Mammary epithelial cell (primary cell): ENCODE measurements at regions of chr7 and their contacts with region 1.

Region 1: GRCh38 chr7:28389504-28390395 is 22.6 kb upstream of the CREB5 start:
- DNase-seq: peak; percentile 58
- H3K4me3 ChIP-seq: peak overlapping the region; percentile 26 to 58 (median 30)
- H3K27ac ChIP-seq: no peak overlapping the region
- H3K4me1 ChIP-seq: peaks cover 9% of the 10 kb centered on the region
- H3K27me3 ChIP-seq: no peaks in the 10 kb centered on the region
- CTCF ChIP-seq: peak; percentile 58 to 65

Region 2: DNA sequence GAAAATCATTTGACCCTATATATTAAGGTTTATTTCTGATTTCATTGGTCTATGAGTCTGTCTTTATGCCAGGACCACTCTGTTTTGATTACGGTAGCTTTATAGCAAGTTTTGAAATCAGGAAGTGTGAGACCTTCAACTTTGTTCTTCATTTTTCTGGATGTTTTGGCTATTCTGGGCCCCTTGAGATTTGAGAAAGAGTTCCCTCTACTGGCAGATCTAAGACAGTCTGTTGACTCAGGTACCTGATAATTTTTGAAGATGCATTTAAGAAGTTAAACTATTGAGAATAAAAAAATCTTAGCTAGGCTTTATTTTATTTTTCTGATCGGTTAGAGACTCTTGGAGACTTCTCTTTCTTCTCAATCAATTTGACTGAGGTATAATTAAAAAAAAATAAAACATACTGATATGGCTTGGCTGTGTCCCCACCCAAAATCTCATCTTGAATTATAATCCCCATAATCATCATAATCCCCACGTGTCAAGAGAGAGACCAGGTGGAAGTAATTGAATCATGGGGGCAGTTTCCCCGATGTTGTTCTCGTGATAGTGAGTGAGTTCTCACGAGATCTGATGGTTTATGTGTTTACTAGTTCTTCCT is 1888.9 kb before region 1 on chr7:
- CTCF ChIA-PET with region 1: no interaction called
- dilution Hi-C with region 1: no loop called
- in situ Hi-C with region 1: no loop called
- intact Hi-C with region 1: no loop called
- DNase-seq: peak; percentile 27
- H3K4me3 ChIP-seq: no peak overlapping the region
- H3K27ac ChIP-seq: no peak overlapping the region
- H3K4me1 ChIP-seq: no peaks in the 10 kb centered on the region
- H3K27me3 ChIP-seq: no peaks in the 10 kb centered on the region
- CTCF ChIP-seq: peak; percentile 37 to 65

Region 3: DNA sequence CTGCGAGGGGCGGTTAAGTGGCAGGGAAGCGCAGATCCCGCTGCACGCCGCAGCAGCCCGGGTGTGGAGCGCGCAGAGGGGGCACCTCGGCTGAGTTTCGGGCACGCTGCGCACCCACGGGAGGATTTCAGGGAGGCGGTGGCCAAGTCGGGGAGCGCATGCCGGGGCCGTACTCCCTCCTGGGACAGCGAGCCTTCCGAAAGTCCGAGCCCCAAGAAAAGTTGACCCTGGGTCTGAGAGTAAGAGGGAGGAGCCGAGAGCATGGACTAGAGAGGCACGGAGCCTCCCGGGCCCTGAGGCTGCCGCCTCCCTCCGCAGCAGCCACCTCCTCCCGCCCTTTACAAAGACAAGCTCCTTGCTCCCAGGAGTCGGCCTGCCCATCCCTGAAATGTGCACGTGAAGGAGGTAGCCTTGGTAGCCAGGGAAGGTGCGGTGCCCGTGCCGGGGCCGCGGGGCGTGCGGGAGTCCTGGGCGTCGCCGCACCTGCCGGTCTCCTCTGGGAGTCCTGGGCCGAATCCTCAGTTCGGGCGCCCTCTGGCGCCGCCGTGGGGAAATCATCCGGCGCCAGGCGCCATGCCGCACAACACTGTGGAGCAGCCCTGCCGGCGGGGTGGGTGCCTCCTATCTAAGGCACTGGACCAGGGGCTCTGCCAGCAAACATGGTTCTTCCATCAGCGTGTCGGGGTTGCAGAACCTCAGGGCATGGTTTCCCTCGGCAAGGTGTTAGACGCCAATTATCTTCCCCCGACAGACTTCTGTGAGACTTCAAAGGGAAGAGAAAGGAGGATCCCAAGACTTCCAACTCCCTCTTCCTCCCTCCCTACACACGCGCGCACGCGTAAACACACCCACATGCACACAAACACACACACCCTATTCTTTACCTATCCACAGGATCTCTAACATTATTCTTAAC is 464.3 kb after region 1 on chr7:
- CTCF ChIA-PET with region 1: no interaction called
- dilution Hi-C with region 1: no loop called
- in situ Hi-C with region 1: loop called in 1 of 2 experiments (anchors 10 kb)
- intact Hi-C with region 1: loop called (anchors 1 kb)
- DNase-seq: peak; percentile 69
- H3K4me3 ChIP-seq: peak overlapping the region; percentile 41 to 65 (median 58)
- H3K27ac ChIP-seq: no peak overlapping the region
- H3K4me1 ChIP-seq: peaks cover 35% of the 10 kb centered on the region
- H3K27me3 ChIP-seq: no peaks in the 10 kb centered on the region
- CTCF ChIP-seq: peak; percentile 61 to 93